ENCODE measurements at regions of chr15 and their contacts with region 1.

Region 1: GRCh38 chr15:98881526-98882520 is 125.8 kb downstream of the PGPEP1L start:
- DNase-seq: peak; percentile 23
- H3K4me3 Mint-ChIP-seq: no peak overlapping the region
- H3K27ac Mint-ChIP-seq: peak overlapping the region; percentile 25
- H3K4me1 Mint-ChIP-seq: peaks cover 14% of the 10 kb centered on the region
- H3K27me3 Mint-ChIP-seq: no peaks in the 10 kb centered on the region

Region 2: DNA sequence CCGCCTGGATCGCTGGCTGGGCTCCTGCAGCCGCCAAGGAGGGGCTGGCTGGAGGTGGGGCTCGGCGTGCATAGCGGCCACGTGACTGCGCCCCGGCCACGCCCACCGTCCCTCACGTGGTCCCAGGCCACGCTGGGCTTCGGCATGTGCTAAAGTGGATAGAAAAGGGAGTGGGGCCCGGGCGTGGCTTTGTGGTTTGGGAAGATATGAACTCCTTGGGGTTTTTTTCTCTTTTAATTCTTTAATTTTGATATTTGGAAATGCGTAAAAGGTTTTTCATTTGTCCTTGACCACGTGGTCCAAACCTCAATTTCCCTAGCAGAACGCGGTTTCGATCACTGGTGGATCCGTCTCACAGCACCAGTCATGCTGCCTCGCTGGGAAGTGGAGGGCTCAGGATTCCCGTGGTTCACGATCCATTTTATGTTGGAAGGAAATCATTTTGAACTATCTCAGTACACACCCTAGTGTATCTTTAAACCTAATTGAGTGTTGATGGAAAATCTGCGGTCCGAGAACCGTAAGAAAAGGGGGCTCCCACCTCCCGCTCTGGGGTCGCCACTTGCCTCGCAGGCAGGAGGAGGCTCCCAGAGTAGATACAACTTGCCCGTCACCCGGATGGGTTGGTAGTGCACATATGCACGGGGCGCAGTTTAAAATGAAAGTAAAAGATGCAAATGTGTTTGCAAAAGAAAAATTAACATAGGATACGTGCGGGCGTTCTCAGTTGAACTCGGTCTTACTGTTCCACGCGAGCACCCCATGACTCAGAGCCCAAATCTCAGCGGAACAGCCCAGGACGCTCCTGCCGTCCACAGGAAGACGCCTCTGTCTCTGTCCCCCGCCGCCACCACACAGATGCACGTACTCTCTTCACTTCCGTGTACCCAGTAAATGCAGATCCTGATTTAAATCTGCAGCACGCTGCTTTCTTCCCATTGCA is 16.2 kb before region 1 on chr15:
- CTCF ChIA-PET with region 1: interaction called, 22 read pairs
- intact Hi-C with region 1: no loop called
- DNase-seq: peak; percentile 71
- H3K4me3 Mint-ChIP-seq: peak overlapping the region; percentile 69
- H3K27ac Mint-ChIP-seq: peak overlapping the region; percentile 85
- H3K4me1 Mint-ChIP-seq: peaks cover 46% of the 10 kb centered on the region
- H3K27me3 Mint-ChIP-seq: no peaks in the 10 kb centered on the region

Region 3: GRCh38 chr15:98935736-98936135 is 53.9 kb after region 1 on chr15:
- CTCF ChIA-PET with region 1: no interaction called
- intact Hi-C with region 1: no loop called
- DNase-seq: no peak
- H3K4me3 Mint-ChIP-seq: no peak overlapping the region
- H3K27ac Mint-ChIP-seq: no peak overlapping the region
- H3K4me1 Mint-ChIP-seq: peaks cover 5% of the 10 kb centered on the region
- H3K27me3 Mint-ChIP-seq: no peaks in the 10 kb centered on the region

Region 4: DNA sequence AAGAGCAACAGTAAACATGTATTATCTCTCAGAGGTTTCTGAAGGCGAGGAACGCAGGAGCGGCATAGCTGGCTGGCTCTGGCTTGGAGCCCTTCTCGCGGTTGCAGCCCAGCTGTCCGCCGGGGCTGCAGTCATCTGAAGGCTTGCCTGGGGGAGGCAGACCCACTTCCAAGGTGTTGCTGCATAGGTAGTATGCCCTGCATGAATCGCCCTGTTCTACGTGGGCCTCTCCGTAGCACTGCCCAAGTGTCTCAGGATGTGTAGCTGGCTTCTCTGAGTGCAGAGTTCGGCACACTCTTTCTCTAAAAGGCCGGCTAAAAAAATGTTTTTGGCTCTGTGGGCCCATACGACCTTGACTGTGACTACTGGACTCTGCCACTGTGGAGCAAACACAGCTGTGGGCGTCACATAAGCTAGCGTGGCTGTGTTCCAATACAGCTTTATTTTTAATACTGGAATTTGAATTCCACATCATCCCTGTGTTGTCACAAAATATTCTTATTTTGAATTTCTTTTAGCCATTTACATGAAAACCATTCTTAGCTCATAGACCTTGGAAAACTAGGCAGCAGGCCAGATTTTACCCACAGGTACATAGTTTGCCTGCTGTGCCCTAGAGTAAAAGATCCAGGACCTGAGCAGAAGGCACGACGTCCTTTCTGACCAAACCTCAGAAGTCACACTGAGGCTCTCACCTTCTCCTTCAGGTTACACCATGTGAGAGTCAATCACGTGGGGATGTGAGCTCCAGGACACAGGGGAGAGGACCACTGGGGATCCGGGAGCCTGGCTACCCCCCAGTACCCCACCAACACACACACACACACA is 69.9 kb after region 1 on chr15:
- CTCF ChIA-PET with region 1: no interaction called
- intact Hi-C with region 1: no loop called
- DNase-seq: no peak
- H3K4me3 Mint-ChIP-seq: no peak overlapping the region
- H3K27ac Mint-ChIP-seq: no peak overlapping the region
- H3K4me1 Mint-ChIP-seq: peaks cover 18% of the 10 kb centered on the region
- H3K27me3 Mint-ChIP-seq: no peaks in the 10 kb centered on the region

Measured in activated naive CD4-positive, alpha-beta T cell treated with anti-CD3 and anti-CD28 coated beads for 36 hours (primary cell).